Spleen (tissue), 13 donors: ENCODE measurements at regions of chr1 and their contacts with region 1.

Region 1: GRCh38 chr1:188958451-188959115 is 1519.1 kb downstream of the BRINP3 start:
- DNase-seq: no peak
- H3K4me3 ChIP-seq: no peak overlapping the region
- H3K27ac ChIP-seq: no peak overlapping the region
- H3K4me1 ChIP-seq: no peaks in the 10 kb centered on the region
- H3K27me3 ChIP-seq: no peaks in the 10 kb centered on the region
- CTCF ChIP-seq: no peak
- POLR2A ChIP-seq: no peak

Region 2: GRCh38 chr1:188991221-188991930 is 32.8 kb after region 1 on chr1:
- intact Hi-C with region 1: no loop called
- DNase-seq: no peak
- H3K4me3 ChIP-seq: no peak overlapping the region
- H3K27ac ChIP-seq: no peak overlapping the region
- H3K4me1 ChIP-seq: no peaks in the 10 kb centered on the region
- H3K27me3 ChIP-seq: no peaks in the 10 kb centered on the region
- CTCF ChIP-seq: no peak
- POLR2A ChIP-seq: no peak

Region 3: GRCh38 chr1:189007824-189008223 is 49.2 kb after region 1 on chr1:
- intact Hi-C with region 1: loop called (anchors 5 kb)
- DNase-seq: no peak
- H3K4me3 ChIP-seq: no peak overlapping the region
- H3K27ac ChIP-seq: no peak overlapping the region
- H3K4me1 ChIP-seq: no peaks in the 10 kb centered on the region
- H3K27me3 ChIP-seq: no peaks in the 10 kb centered on the region
- CTCF ChIP-seq: no peak
- POLR2A ChIP-seq: no peak